ENCODE measurements at regions of chr16 and their contacts with region 1.

Region 1: GRCh38 chr16:88737298-88738150 is 31.2 kb downstream of the CTU2 start:
- DNase-seq: peak; percentile 86
- ATAC-seq: peak; percentile 91
- H3K4me3 Mint-ChIP-seq: no peak overlapping the region
- H3K27ac Mint-ChIP-seq: no peak overlapping the region
- H3K4me1 Mint-ChIP-seq: no peaks in the 10 kb centered on the region
- H3K27me3 Mint-ChIP-seq: no peaks in the 10 kb centered on the region

Region 2: DNA sequence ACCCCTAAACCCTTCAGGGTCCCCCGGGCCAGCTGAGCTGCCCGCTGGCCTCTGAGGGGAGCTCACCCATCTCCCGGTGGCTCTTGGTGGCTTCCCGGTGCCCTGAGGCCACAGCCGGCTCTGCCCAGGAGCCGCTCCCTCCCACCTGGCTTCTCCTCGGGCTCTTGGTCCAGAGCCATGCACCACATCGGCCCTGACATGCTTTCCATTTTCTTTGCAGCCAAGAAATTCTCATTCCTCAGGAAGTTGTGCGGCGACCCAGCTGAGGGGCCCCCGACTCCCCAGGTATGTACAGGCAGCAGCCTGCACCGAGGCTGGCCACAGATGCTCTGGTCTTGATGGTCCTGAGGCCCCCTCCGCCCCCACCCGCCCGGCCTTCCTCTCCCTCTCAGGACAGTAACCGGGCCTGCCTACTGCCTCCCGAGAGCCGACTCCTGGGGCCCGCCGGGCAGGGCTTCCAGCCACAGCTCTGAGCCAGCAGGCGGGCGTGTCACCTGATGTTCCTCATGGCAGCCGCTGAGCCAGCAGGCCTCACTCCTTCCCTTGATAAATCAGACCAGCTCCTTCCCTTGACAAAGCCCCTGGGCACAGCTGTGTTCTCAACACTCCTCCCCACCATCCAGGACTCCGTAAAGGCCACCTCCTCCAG is 312.8 kb before region 1 on chr16:
- CTCF ChIA-PET with region 1: no interaction called
- DNase-seq: no peak
- ATAC-seq: no peak
- H3K4me3 Mint-ChIP-seq: no peak overlapping the region
- H3K27ac Mint-ChIP-seq: no peak overlapping the region
- H3K4me1 Mint-ChIP-seq: peaks cover under 1% of the 10 kb centered on the region
- H3K27me3 Mint-ChIP-seq: peaks cover 11% of the 10 kb centered on the region

Region 3: GRCh38 chr16:88686439-88687253 is 50.9 kb before region 1 on chr16 and contains the start of gene SNAI3:
- CTCF ChIA-PET with region 1: interaction called, 11 read pairs
- DNase-seq: peak; percentile 91
- ATAC-seq: peak; percentile 90
- H3K4me3 Mint-ChIP-seq: peak within 1 kb of the TSS; percentile 78
- H3K27ac Mint-ChIP-seq: peak within 1 kb of the TSS; percentile 59
- H3K4me1 Mint-ChIP-seq: peaks cover 46% of the 10 kb centered on the region
- H3K27me3 Mint-ChIP-seq: peaks cover 4% of the 10 kb centered on the region
- total RNA-seq, gene SNAI3: 5.6 to 14.1 TPM

Region 4: DNA sequence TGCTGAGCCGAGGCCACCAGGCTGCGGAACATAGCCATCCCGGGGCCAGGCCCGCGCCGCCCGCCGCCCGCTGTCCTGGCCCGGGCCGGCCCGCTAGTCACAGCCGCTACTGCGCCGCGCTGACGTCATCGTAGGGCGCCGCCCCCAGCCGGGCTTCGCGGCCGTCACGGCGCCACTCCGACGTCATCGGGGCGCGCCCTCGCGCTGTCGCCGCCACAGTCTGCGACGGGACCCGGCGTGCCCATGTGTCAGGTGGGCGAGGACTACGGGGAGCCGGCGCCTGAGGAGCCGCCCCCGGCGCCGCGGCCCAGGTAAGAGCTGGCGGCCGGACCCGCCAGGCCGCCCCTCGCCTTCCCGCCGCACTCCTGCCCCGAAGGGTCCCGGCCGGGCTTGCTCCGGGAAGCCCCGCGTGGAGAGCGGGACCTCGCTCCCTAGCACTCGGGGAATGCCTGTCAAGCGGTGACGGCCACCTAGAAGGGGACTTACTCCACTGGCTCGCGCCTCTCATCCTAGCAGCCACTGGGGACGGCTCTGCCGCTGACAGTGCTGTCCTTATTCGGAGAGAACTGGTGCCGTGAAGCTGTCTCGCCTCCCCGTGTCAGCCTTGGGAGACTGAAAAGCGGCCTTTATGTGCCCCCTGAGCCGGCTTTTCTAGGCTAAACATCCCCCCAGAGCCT is 31.1 kb before region 1 on chr16 and contains the starts of genes CTU2 and RNF166:
- CTCF ChIA-PET with region 1: interaction called, 17 read pairs
- DNase-seq: peak; percentile 95
- ATAC-seq: peak; percentile 70
- H3K4me3 Mint-ChIP-seq: peak within 1 kb of the TSS; percentile 89
- H3K27ac Mint-ChIP-seq: peak within 1 kb of the TSS; percentile 98
- H3K4me1 Mint-ChIP-seq: peaks cover 46% of the 10 kb centered on the region
- H3K27me3 Mint-ChIP-seq: no peaks in the 10 kb centered on the region
- total RNA-seq, gene CTU2: 31.1 to 40.0 TPM
- total RNA-seq, gene RNF166: 124 to 174 TPM

Region 5: GRCh38 chr16:88754912-88755744 is 17.6 kb after region 1 on chr16:
- CTCF ChIA-PET with region 1: interaction called, 40 read pairs
- DNase-seq: no peak
- ATAC-seq: no peak
- H3K4me3 Mint-ChIP-seq: no peak overlapping the region
- H3K27ac Mint-ChIP-seq: no peak overlapping the region
- H3K4me1 Mint-ChIP-seq: peaks cover 28% of the 10 kb centered on the region
- H3K27me3 Mint-ChIP-seq: no peaks in the 10 kb centered on the region

Region 6: DNA sequence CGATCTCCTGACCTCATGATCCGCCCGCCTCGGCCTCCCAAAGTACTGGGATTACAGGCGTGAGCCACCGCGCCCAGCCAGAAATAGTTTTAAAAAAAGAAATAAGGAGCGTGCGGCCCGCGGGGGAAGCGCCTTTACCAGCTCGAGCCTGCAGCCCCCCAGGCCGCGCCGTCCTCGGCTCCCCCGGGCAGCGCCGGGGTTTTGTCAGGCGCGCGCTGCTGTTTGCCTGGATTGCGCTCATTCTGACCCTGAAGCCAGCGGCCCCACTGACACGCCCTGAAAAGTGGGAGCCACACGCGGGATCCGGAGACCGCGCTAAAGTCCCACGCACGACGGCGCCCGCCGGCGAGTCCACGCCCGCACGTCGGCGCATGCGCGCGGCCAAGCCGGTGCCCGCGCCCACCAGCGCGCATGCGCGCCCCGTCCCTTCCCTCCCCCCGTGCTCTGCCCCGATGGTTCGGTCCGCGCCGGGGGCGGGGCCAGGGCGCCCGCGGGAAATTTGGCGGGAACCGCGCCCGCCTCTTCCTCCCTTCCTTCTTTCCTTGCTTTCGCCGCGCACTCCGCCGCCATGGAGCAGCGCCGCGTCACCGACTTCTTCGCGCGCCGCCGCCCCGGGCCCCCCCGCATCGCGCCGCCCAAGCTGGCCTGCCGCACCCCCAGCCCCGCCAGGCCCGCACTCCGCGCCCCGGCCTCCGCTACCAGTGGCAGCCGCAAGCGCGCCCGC is 65.9 kb after region 1 on chr16 and contains the start of gene CDT1:
- CTCF ChIA-PET with region 1: interaction called, 20 read pairs
- DNase-seq: peak; percentile 86
- ATAC-seq: peak; percentile 57
- H3K4me3 Mint-ChIP-seq: peak within 1 kb of the TSS; percentile 82
- H3K27ac Mint-ChIP-seq: peak within 1 kb of the TSS; percentile 88
- H3K4me1 Mint-ChIP-seq: peaks cover 44% of the 10 kb centered on the region
- H3K27me3 Mint-ChIP-seq: no peaks in the 10 kb centered on the region
- total RNA-seq, gene CDT1: 124 to 191 TPM

Region 7: GRCh38 chr16:88856828-88857733 is 119.6 kb after region 1 on chr16 and contains the starts of genes GALNS and TRAPPC2L:
- CTCF ChIA-PET with region 1: interaction called, 16 read pairs
- DNase-seq: peak; percentile 99
- ATAC-seq: peak; percentile 86
- H3K4me3 Mint-ChIP-seq: peak within 1 kb of the TSS; percentile 94
- H3K27ac Mint-ChIP-seq: peak within 1 kb of the TSS; percentile 91
- H3K4me1 Mint-ChIP-seq: peaks cover 30% of the 10 kb centered on the region
- H3K27me3 Mint-ChIP-seq: no peaks in the 10 kb centered on the region
- total RNA-seq, gene GALNS: 30.8 to 38.8 TPM
- total RNA-seq, gene TRAPPC2L: 49.2 to 51.3 TPM

Measured in activated CD8-positive, alpha-beta memory T cell treated with anti-CD3 and anti-CD28 coated beads, Interleukin-2, amount 10 ng/mL, durations not matched to agents 7 days and 5 days (primary cell).